Activated naive CD8-positive, alpha-beta T cell treated with anti-CD3 and anti-CD28 coated beads, Interleukin-2, amount 10 ng/mL, durations not matched to agents 7 days and 5 days (primary cell): ENCODE measurements at regions of chr6 and their contacts with region 1.

Region 1: GRCh38 chr6:31575335-31575901 is at the start of gene TNF:
- DNase-seq: peak; percentile 71
- ATAC-seq: peak; percentile 12
- H3K4me3 Mint-ChIP-seq: peak within 1 kb of the TSS; percentile 90
- H3K27ac Mint-ChIP-seq: peak within 1 kb of the TSS; percentile 81
- H3K4me1 Mint-ChIP-seq: peaks cover 81% of the 10 kb centered on the region
- H3K27me3 Mint-ChIP-seq: peaks cover 3% of the 10 kb centered on the region
- total RNA-seq, gene TNF: 18.5 to 18.6 TPM

Region 2: DNA sequence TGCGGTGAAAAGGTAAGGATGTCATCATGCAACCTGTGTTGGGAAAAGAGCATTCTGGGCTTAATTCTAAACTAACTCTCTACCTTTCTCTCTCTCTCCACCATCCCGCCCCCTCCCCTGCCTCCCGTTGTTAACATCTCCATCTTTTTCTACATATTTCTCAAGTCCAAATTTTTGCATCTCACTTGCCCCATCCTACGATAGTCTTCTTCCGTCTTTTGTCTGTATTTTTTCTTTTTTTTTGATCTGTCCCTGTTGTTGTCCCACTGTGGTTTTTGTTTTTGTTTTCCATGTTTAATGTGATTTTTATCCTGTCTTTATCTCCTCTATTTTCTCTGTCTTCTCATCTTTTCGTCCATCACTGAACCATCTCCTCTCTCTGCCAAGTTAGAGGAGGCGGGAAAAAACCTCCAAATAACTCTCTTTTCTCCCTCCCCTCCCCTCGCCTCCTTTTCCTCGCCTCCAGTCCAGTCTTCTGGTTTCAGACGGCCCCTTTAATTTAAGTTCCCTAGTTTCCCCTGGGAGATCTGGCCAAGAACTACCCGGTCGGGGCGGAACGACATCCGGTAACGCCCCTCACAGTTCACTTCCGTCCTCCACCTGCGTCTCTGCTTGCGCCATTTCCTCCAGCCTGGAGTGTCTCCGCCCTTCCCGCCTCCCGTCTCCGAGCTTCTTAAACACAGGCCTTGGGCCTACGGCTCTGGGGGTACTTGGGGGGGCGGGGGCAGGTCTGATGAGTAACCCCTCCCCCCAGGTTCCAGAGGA is 28.3 kb before region 1 on chr6 and contains the start of gene NFKBIL1:
- POLR2A ChIA-PET with region 1: interaction called, 27 read pairs
- DNase-seq: peak; percentile 83
- ATAC-seq: peak; percentile 81
- H3K4me3 Mint-ChIP-seq: peak within 1 kb of the TSS; percentile 88
- H3K27ac Mint-ChIP-seq: peak within 1 kb of the TSS; percentile 71
- H3K4me1 Mint-ChIP-seq: peaks cover 32% of the 10 kb centered on the region
- H3K27me3 Mint-ChIP-seq: no peaks in the 10 kb centered on the region
- total RNA-seq, gene NFKBIL1: 15.4 to 17.6 TPM

Region 3: DNA sequence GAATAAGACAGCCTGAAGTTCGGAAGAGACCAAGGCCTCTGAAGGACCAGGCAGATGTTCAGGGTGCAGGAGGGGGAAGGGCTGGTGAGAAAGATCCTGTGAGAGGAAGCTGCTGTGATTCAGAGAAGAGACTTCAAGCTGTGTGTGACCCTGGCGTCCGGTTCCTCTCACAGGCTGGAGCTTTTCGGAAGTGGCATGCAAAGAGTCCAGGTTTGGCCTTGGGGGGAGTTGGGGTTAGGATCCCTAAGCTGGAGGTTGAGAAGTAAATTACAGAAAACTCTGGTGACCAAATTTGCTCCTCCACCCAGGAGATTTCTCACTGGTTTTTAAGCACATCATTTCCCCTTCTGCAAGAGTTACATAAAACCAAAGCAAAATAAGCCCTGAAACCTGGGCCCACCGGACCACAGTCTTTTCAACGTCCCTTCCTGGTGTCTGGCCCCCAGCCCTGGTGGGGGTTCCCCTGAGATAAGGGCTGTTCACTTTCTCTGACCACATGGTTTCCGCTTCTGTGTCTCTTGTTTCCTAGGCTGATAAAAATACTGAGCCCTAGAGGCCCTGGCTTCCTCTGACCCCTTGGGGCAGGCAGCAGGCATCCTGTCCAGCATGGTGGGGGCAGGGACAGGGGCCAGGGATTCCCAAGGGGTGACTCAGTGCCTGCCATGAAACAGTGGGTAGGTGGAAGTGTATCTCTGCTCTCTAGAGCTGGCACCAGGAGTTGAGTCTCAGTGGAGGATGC is 15.3 kb before region 1 on chr6:
- POLR2A ChIA-PET with region 1: interaction called, 101 read pairs
- DNase-seq: no peak
- ATAC-seq: peak; percentile 78
- H3K4me3 Mint-ChIP-seq: peak overlapping the region; percentile 76
- H3K27ac Mint-ChIP-seq: peak overlapping the region; percentile 70
- H3K4me1 Mint-ChIP-seq: peaks cover 55% of the 10 kb centered on the region
- H3K27me3 Mint-ChIP-seq: peaks cover 31% of the 10 kb centered on the region